ENCODE measurements at regions of chr1 and their contacts with region 1.

Region 1: GRCh38 chr1:52834798-52835197 is 7.8 kb upstream of the ZYG11A start:
- DNase-seq: no peak
- ATAC-seq: no peak
- H3K4me3 ChIP-seq: no peak overlapping the region
- H3K27ac ChIP-seq: no peak overlapping the region
- H3K4me1 ChIP-seq: no peaks in the 10 kb centered on the region
- H3K27me3 ChIP-seq: no peaks in the 10 kb centered on the region
- CTCF ChIP-seq: no peak
- POLR2A ChIP-seq: no peak

Region 2: DNA sequence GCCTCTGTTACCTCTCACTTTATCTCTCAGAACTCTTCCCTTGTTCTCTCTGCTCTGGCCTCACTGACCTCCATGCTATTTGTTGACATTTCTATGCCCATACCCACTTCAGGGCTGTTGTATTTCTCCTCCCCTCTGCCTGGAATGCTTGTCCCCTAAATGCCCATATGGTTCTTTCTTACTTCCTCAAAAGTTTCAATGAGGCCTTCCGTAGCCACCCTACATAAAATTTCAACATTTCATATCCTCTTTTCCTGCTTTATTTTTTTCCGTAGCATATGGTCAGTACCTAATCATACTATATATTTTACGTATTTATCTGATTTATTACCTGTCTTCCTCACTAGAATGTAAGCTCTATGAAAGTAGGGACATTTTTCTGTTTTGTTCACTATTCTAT is 39.3 kb before region 1 on chr1:
- intact Hi-C with region 1: no loop called
- DNase-seq: no peak
- ATAC-seq: no peak
- H3K4me3 ChIP-seq: no peak overlapping the region
- H3K27ac ChIP-seq: no peak overlapping the region
- H3K4me1 ChIP-seq: peaks cover 0 to 5% (median 0%) of the 10 kb centered on the region in 12 donors
- H3K27me3 ChIP-seq: no peaks in the 10 kb centered on the region
- CTCF ChIP-seq: no peak
- POLR2A ChIP-seq: no peak

Region 3: DNA sequence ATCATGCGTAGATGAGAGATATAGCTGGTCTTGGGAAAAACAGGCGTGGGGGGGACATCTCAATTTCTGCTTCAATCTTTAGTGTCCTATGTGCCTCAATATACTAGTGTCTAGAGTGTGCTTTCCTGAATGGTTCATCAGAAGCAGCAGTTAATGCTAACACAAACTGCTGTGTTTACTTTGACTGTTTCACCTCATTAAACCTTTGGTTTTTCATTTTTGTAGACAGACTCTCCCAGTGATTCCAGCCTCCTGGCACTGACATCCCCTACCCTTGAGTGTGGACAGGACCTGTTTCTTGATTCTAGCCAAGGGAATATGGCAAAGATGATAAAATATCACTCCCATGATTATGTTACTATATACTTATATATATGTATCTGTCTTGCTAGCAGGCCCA is 45.4 kb after region 1 on chr1:
- intact Hi-C with region 1: loop called in 1 of 10 experiments (anchors 10 kb)
- DNase-seq: no peak
- ATAC-seq: no peak
- H3K4me3 ChIP-seq: no peak overlapping the region
- H3K27ac ChIP-seq: no peak overlapping the region
- H3K4me1 ChIP-seq: no peaks in the 10 kb centered on the region
- H3K27me3 ChIP-seq: no peaks in the 10 kb centered on the region
- CTCF ChIP-seq: no peak
- POLR2A ChIP-seq: no peak

Region 4: GRCh38 chr1:53153752-53154151 is 319.0 kb after region 1 on chr1:
- intact Hi-C with region 1: loop called in 1 of 10 experiments (anchors 10 kb)
- DNase-seq: no peak
- ATAC-seq: no peak
- H3K4me3 ChIP-seq: no peak overlapping the region
- H3K27ac ChIP-seq: no peak overlapping the region
- H3K4me1 ChIP-seq: no peaks in the 10 kb centered on the region
- H3K27me3 ChIP-seq: no peaks in the 10 kb centered on the region
- CTCF ChIP-seq: no peak
- POLR2A ChIP-seq: no peak

Measured in heart left ventricle (tissue), 16 donors.